ENCODE measurements at regions of chr16 and their contacts with region 1.

Region 1: DNA sequence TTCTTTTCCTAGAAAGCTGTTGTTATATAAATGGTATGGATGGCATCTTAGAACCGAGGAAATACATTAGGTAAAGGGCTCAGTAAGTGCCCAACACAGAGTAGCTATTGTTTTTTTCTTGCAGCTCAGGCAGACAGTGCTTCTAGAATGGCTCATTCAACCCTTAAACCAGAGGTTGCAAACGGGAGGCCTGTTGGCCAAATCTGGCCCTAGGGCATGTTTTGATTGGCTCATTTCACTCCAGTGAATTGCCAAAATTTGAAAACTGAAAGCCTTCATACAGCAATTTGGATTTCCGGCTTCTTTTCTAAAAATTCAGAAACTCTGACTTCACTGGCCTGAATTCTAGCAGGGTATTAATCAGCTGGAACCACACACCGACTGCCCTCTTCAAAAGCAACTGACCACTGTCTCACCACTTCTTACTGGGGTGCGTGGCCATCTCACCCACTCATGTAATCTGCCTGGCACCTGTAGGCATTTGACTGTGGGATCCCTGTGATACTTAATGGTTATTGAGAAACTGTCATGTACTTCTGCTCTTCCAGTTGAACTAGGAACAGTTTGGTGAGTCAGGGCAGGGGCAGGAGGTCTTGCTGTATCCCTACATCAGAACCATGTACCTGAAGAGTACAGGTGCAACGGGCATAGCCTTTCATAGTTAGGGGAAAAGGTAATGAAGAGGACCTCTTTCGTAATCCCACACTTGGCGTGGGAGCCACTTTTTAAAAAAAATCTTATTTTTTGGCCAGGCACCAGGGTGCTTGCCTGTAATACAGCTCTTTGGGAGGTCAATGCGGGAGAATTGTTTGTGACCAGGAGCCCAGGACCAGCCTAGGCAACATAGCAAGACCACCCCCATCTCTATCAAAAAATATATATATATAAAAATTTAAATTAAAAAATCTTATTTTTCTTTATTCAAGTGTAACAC is 53.6 kb upstream of the SCNN1B start:
- DNase-seq: no peak
- H3K4me3 ChIP-seq: no peak overlapping the region
- H3K27ac ChIP-seq: no peak overlapping the region
- H3K4me1 ChIP-seq: no peaks in the 10 kb centered on the region
- H3K27me3 ChIP-seq: no peaks in the 10 kb centered on the region
- CTCF ChIP-seq: no peak
- EP300 ChIP-seq: no peak
- POLR2A ChIP-seq: no peak

Region 2: DNA sequence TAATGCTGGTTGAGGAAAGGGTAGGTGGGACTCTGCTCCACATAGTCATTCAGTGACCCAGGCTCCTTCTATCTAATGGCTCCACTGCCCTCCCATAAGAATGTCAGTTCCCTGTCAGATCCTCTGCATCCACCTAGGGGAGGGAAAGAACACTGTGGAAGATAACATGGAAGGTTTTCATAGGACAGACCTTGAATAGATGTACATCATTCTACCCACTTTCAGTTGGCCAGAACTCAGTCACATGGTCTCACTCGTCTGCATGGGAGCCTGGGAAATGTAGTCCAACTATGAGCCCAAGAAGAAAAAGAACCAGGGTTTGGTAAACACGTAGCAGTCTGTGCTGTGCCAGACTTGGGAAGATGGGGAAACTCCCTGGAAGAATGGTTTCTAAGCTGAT is 26.4 kb after region 1 on chr16:
- intact Hi-C with region 1: no loop called
- DNase-seq: no peak
- H3K4me3 ChIP-seq: no peak overlapping the region
- H3K27ac ChIP-seq: no peak overlapping the region
- H3K4me1 ChIP-seq: peaks cover 0 to 11% (median 0%) of the 10 kb centered on the region in 4 donors
- H3K27me3 ChIP-seq: no peaks in the 10 kb centered on the region
- CTCF ChIP-seq: no peak
- EP300 ChIP-seq: no peak
- POLR2A ChIP-seq: no peak

Region 3: DNA sequence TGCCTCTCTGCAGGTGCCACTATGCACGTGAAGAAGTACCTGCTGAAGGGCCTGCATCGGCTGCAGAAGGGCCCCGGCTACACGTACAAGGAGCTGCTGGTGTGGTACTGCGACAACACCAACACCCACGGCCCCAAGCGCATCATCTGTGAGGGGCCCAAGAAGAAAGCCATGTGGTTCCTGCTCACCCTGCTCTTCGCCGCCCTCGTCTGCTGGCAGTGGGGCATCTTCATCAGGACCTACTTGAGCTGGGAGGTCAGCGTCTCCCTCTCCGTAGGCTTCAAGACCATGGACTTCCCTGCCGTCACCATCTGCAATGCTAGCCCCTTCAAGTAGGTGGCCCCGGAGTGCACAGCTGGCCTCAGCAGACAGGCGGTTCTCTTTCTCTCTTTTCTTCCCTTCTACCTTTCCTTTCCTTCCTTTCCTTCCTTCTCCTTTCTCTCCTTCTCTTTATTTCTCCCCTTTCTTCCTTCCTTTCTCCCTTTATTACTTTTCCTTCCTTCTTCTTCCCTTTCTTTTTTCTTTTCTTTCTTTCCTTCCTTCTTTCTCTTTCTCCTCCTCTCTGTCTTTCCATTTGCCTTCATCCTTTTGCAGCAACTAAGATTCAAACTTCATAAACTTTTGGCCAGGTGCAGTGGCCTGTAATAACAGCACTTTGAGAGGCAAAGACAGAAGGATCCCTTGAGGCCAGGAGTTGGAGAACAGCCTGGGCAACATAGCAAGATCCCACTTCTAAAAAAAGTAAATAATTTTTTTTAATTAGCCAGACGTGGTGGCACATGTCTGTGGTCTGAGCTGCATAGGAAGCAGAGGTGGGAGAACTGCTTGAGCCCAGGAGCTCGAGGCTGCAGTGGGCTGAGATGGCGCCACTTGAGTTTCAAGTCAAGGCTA is 100.3 kb after region 1 on chr16:
- intact Hi-C with region 1: loop called (anchors 10 kb)
- DNase-seq: peak; percentile 26
- H3K4me3 ChIP-seq: no peak overlapping the region
- H3K27ac ChIP-seq: no peak overlapping the region
- H3K4me1 ChIP-seq: peaks cover 0 to 5% (median 1%) of the 10 kb centered on the region in 4 donors
- H3K27me3 ChIP-seq: no peaks in the 10 kb centered on the region
- CTCF ChIP-seq: no peak
- EP300 ChIP-seq: no peak
- POLR2A ChIP-seq: no peak